ENCODE measurements at regions of chr15 and their contacts with region 1.

Region 1: GRCh38 chr15:66815322-66815721 is 113.3 kb downstream of the SMAD6 start:
- DNase-seq: no peak

Region 2: DNA sequence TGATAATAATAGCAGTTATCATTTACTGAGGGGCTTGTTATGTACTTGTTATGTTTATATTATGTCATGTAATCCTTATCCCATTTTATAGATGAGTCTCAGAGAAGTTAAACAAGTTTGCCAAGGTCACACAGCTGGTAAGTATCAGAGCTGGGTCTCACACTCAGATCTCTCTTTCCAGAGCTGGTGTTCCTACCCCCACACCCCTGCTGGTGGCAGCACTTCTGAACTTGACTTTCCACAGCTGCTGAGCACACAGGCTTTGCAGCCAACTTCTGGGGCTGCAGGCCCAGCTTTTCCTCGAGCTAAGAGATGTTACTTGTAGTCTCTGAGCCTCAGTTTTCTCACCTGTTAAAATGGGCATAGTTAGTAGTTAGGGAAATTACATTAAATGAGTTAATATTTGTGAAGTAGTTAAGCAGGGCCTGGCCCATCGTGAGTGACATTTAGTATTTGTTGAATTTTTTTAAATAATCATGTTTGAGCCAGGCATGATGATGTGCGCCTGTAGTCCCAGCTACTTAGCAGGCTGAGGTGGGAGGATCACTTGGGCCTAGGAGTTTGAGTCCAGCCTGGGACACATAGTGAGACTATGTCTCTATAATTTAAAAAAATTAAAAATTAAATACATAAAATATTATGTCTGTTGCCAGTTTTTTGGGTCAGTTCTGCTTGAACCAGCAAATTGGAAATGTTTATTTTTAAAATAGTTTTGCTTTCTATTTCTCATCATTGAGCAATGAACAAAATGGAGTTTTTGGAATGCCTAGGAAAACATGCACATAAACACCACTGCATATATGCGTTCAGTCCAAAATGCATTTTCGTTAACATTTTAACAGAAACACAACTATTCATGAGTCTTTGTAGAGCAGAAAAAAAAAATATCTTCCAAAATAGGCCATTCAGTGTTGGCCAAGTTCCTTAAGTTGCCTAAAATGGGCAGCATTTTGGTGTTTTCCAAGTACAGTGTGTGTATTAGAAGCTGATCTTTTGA is 26.0 kb before region 1 on chr15:
- CTCF ChIA-PET with region 1: interaction called, 10 read pairs
- POLR2A ChIA-PET with region 1: no interaction called
- DNase-seq: peak; percentile 49